Sigmoid colon (tissue), 7 donors: ENCODE measurements at regions of chr7 and their contacts with region 1.

Region 1: GRCh38 chr7:28078036-28078901 is 102.3 kb downstream of the JAZF1 start:
- DNase-seq: no peak
- H3K4me3 ChIP-seq: no peak overlapping the region
- H3K27ac ChIP-seq: peak overlapping the region in 2 of 4 donors; percentile 45 to 53
- H3K4me1 ChIP-seq: peaks cover 0 to 86% (median 52%) of the 10 kb centered on the region in 4 donors
- H3K27me3 ChIP-seq: no peaks in the 10 kb centered on the region
- CTCF ChIP-seq: peak; percentile 84 to 96 (median 89)
- EP300 ChIP-seq: no peak
- POLR2A ChIP-seq: no peak

Region 2: GRCh38 chr7:28017372-28017771 is 60.9 kb before region 1 on chr7:
- intact Hi-C with region 1: no loop called
- DNase-seq: no peak
- H3K4me3 ChIP-seq: no peak overlapping the region
- H3K27ac ChIP-seq: peak overlapping the region in 3 of 4 donors; percentile 74 to 76 (median 75)
- H3K4me1 ChIP-seq: peaks cover 0 to 99% (median 69%) of the 10 kb centered on the region in 4 donors
- H3K27me3 ChIP-seq: no peaks in the 10 kb centered on the region
- CTCF ChIP-seq: no peak
- EP300 ChIP-seq: peak in 1 of 4 donors; percentile 15
- POLR2A ChIP-seq: no peak

Region 3: GRCh38 chr7:28062197-28062991 is 15.9 kb before region 1 on chr7:
- intact Hi-C with region 1: loop called (anchors 2 kb)
- DNase-seq: peak; percentile 90
- H3K4me3 ChIP-seq: no peak overlapping the region
- H3K27ac ChIP-seq: peak overlapping the region in 3 of 4 donors; percentile 80 to 85 (median 81)
- H3K4me1 ChIP-seq: peaks cover 0 to 74% (median 64%) of the 10 kb centered on the region in 4 donors
- H3K27me3 ChIP-seq: no peaks in the 10 kb centered on the region
- CTCF ChIP-seq: peak in 3 of 4 experiments; percentile 44 to 68 (median 60)
- EP300 ChIP-seq: no peak
- POLR2A ChIP-seq: no peak